ENCODE measurements at regions of chr12 and their contacts with region 1.

Region 1: DNA sequence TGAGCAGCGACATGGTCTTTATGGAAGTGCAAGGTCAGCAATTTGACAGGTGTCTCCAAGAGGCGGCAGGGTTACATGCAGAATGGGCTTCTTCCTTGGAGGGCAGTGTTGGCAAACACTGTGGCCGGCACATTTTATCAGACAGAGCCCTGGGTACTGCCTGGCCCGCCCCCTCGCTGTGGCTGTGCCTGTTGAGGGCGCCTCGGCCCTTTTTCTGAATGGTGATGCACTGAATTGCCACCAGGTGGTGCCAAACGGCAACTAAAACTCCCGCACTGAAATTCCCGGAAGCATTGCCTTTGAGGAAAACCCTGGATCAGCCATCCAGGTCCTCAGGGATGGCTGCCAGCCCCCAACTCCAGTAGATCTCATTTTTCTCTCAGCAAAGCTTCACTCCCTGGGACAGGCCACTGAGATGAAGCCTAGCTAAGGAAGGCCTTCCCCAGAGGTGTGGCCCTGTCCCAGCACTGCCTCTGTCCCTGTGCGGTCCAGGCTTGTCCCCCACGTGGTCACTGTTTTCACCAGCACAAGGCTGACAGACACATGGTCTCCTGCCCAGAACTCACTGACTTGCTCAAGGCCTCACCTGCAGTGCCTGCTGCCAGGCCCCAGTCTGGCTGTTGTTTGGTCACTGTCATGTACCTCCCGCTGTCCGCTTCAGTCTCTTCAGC is 73.6 kb downstream of the TESC start:
- DNase-seq: peak; percentile 51 to 61
- H3K4me3 ChIP-seq: no peak overlapping the region
- H3K27ac ChIP-seq: no peak overlapping the region
- H3K4me1 ChIP-seq: no peaks in the 10 kb centered on the region
- H3K27me3 ChIP-seq: no peaks in the 10 kb centered on the region
- CTCF ChIP-seq: peak; percentile 88

Region 2: DNA sequence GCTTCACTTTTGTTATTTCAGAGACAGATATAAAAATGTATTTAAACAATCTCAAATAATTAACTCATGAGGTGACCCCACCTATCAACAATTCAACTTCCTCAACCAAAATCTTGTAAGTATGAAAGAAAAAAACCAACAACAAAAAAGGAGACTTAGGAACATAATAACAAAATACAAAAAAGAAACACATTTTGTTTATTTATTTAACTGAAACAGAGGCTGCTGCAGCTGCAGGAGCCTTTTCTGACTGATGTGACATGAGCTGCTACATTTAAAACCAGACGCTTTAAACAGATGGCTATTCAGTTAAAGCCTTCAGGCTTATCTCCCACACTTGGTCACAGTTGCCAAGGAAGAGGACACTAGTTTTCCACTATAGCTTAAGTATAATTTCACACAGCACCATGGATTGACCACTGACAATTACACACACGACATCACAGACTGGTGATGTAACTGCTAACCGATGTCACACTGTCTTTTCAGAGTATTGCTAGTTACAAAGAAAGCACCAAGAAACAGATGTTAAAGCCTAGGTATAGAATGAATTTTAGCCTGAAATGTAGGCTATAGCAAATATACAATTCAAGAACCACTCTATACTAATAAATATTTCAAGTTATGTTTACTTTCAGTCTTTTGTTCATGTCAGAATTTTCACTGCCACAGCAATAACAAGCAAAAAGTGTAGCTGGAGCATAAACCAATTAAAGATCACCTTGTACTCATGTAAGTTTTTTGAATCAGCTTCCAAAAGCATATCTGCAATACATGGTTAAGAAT is 861.2 kb before region 1 on chr12:
- CTCF ChIA-PET with region 1: no interaction called
- POLR2A ChIA-PET with region 1: interaction called, 15 read pairs
- intact Hi-C with region 1: no loop called
- DNase-seq: no peak
- H3K4me3 ChIP-seq: no peak overlapping the region; the same call in 1 of the 2 replicates
- H3K27ac ChIP-seq: peak overlapping the region; percentile 59
- H3K4me1 ChIP-seq: peaks cover 60% of the 10 kb centered on the region
- H3K27me3 ChIP-seq: no peaks in the 10 kb centered on the region
- CTCF ChIP-seq: no peak

Region 3: DNA sequence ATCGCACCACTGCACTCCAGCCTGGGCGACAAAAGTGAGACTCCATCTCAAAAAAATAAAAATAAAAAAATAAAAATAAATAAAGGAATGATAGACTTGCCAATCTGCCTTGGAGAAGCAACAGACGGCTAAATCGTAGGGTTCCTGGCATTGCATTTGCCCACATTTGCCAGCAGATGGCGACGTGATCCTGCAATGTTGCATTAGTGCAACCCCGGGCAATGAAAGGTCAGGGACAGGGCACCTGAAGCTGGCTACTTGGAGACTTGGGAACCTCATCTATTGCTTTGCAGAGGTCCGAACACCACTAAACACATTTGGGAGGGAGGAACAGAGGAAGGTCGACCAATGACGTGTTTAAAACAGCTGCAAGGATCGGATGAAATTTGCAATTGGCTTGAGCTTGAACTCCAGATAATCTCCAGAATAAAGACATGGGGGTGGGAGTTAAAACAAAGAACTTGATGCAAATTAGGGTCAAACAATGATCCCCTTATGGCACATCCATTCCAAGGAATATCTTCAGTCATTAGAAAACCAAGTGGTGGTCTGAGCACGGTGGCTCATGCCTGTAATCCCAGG is 322.3 kb before region 1 on chr12:
- CTCF ChIA-PET with region 1: no interaction called
- POLR2A ChIA-PET with region 1: no interaction called
- intact Hi-C with region 1: loop called (anchors 10 kb)
- DNase-seq: peak; percentile 58 to 62
- H3K4me3 ChIP-seq: no peak overlapping the region
- H3K27ac ChIP-seq: no peak overlapping the region
- H3K4me1 ChIP-seq: peaks cover 14% of the 10 kb centered on the region
- H3K27me3 ChIP-seq: no peaks in the 10 kb centered on the region
- CTCF ChIP-seq: peak; percentile 92

Region 4: GRCh38 chr12:117037289-117038022 is 11.8 kb after region 1 on chr12:
- CTCF ChIA-PET with region 1: interaction called, 10 read pairs
- POLR2A ChIA-PET with region 1: no interaction called
- intact Hi-C with region 1: no loop called
- DNase-seq: no peak
- H3K4me3 ChIP-seq: no peak overlapping the region
- H3K27ac ChIP-seq: no peak overlapping the region
- H3K4me1 ChIP-seq: no peaks in the 10 kb centered on the region
- H3K27me3 ChIP-seq: no peaks in the 10 kb centered on the region
- CTCF ChIP-seq: no peak

Region 5: DNA sequence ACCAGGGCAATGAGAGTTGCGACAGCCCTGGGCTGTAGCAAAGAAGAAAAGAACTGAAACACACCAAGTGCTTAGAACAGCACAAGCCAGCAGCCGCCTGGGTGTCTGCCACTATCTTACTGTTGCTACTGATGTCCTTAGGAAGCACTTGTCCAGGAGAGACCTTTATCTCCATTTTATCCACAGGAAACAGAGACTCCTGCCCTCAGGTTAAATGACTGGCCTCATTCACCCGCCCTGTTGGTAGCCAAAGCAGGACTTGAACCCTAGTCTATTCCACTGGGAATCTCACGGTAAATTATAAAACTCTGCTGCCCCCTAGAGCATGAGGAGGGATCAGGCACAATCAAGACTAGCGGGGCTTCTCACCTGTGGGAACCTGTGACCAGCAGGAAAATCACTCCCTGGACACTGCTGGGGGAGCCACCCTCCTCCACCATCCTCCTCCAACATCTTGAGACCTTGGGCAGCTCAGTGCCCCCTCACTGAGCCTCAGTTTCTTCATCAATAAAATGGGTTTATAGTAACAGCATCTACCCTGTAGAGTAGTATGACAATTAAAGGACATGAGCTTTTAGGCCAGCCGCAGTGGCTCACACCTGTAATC is 94.1 kb after region 1 on chr12:
- CTCF ChIA-PET with region 1: no interaction called
- POLR2A ChIA-PET with region 1: no interaction called
- intact Hi-C with region 1: loop called (anchors 1 kb)
- DNase-seq: peak in 1 of 2 experiments; percentile 25
- H3K4me3 ChIP-seq: no peak overlapping the region
- H3K27ac ChIP-seq: no peak overlapping the region
- H3K4me1 ChIP-seq: peaks cover 3% of the 10 kb centered on the region; the same call in 1 of the 2 replicates
- H3K27me3 ChIP-seq: no peaks in the 10 kb centered on the region
- CTCF ChIP-seq: peak; percentile 88

Region 6: DNA sequence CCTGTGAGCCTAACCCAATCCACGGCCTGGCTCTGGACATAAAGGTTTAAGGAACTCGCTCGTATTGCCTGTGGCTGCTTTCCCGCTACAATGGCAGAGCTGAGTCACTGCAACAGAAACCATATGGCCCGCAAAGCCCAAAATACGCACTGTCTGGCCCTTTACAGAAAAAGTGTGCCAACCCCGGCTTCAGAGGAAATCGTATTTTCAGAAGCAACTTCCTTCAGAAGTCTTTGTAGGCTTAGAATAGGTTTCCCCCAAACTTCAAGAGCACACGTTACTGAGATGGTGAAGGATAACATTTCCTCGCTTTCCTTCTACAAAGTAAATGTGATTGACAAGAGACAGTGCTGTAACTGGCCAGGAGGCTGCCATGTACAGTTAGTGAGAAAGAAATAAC is 108.4 kb after region 1 on chr12:
- CTCF ChIA-PET with region 1: no interaction called
- POLR2A ChIA-PET with region 1: no interaction called
- intact Hi-C with region 1: loop called (anchors 1 kb)
- DNase-seq: no peak
- H3K4me3 ChIP-seq: no peak overlapping the region
- H3K27ac ChIP-seq: no peak overlapping the region
- H3K4me1 ChIP-seq: no peaks in the 10 kb centered on the region
- H3K27me3 ChIP-seq: no peaks in the 10 kb centered on the region
- CTCF ChIP-seq: no peak

Region 7: GRCh38 chr12:117850048-117850447 is 824.4 kb after region 1 on chr12:
- CTCF ChIA-PET with region 1: no interaction called
- POLR2A ChIA-PET with region 1: no interaction called
- intact Hi-C with region 1: loop called (anchors 5 kb)
- DNase-seq: peak in 1 of 2 experiments; percentile 36
- H3K4me3 ChIP-seq: no peak overlapping the region
- H3K27ac ChIP-seq: no peak overlapping the region
- H3K4me1 ChIP-seq: peaks cover 18% of the 10 kb centered on the region
- H3K27me3 ChIP-seq: no peaks in the 10 kb centered on the region
- CTCF ChIP-seq: peak; percentile 88

Measured in PC-9 (cell line).